ENCODE measurements at regions of chr2 and their contacts with region 1.

Region 1: GRCh38 chr2:231557571-231558237 is 27.5 kb upstream of the NMUR1 start:
- DNase-seq: peak in 1 of 2 donors; percentile 76
- ATAC-seq: peak; percentile 91
- H3K4me3 ChIP-seq: no peak overlapping the region
- H3K27ac ChIP-seq: no peak overlapping the region
- H3K4me1 ChIP-seq: no peaks in the 10 kb centered on the region
- H3K27me3 ChIP-seq: no peaks in the 10 kb centered on the region

Region 2: GRCh38 chr2:231425811-231426728 is 131.6 kb before region 1 on chr2:
- intact Hi-C with region 1: no loop called
- DNase-seq: peak in 1 of 2 donors; percentile 34
- ATAC-seq: no peak
- H3K4me3 ChIP-seq: no peak overlapping the region
- H3K27ac ChIP-seq: no peak overlapping the region
- H3K4me1 ChIP-seq: no peaks in the 10 kb centered on the region
- H3K27me3 ChIP-seq: no peaks in the 10 kb centered on the region

Region 3: DNA sequence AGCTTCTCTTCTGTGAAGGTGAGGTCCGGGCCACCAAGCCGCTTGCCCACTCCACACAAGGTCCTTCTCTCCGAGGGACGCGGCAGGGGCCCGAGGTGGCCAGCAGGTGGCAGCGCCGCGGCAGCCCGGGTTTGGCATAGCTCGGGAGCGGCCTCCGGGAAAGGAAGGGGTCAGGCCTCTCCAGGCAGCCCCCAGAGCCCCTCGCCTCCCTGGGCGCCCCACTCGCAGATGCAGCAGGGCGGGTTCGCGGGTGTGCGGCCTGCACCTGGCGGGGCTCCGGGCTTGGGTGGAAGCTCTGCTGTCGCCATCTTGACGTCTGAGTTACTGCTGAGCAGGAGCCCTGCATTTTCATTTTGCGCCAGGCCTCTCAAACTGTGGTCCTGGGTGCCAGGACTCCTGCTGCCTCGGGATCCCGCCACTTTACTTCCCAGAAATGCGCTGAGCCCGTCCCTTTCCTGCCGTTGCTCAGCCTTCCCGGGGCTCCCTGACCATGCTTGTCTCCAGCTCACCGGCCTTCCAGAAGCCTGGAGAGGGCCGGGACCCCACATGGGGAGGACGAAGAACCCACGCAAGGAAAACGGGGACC is 74.8 kb before region 1 on chr2:
- intact Hi-C with region 1: loop called (anchors 1 to 5 kb)
- DNase-seq: peak; percentile 85 to 94
- ATAC-seq: peak; percentile 92
- H3K4me3 ChIP-seq: peak overlapping the region; percentile 9 to 24
- H3K27ac ChIP-seq: peak overlapping the region; percentile 24 to 29
- H3K4me1 ChIP-seq: no peaks in the 10 kb centered on the region
- H3K27me3 ChIP-seq: no peaks in the 10 kb centered on the region

Region 4: DNA sequence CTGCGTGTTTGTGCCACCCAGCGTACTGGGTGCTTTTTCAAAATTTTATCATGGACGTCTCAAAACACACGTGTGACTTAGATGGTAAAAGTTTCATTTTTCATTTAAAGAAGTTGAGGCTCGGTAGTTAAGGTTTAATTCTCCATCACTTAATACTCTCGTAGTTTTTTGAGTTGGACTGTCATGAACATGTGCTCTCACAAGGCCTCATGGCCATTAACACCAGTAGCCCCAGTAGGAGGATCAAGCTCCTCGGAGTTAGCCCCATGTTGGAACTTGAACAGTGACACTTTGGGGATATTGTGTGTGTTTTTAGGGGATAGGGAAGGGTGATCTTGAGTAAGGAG is 42.8 kb before region 1 on chr2:
- intact Hi-C with region 1: loop called in 1 of 2 experiments (anchors 5 kb)
- DNase-seq: peak in 1 of 2 donors; percentile 3
- ATAC-seq: no peak
- H3K4me3 ChIP-seq: peak overlapping the region; percentile 59 to 71
- H3K27ac ChIP-seq: peak overlapping the region in 1 of 2 donors; percentile 68
- H3K4me1 ChIP-seq: no peaks in the 10 kb centered on the region
- H3K27me3 ChIP-seq: no peaks in the 10 kb centered on the region

Region 5: DNA sequence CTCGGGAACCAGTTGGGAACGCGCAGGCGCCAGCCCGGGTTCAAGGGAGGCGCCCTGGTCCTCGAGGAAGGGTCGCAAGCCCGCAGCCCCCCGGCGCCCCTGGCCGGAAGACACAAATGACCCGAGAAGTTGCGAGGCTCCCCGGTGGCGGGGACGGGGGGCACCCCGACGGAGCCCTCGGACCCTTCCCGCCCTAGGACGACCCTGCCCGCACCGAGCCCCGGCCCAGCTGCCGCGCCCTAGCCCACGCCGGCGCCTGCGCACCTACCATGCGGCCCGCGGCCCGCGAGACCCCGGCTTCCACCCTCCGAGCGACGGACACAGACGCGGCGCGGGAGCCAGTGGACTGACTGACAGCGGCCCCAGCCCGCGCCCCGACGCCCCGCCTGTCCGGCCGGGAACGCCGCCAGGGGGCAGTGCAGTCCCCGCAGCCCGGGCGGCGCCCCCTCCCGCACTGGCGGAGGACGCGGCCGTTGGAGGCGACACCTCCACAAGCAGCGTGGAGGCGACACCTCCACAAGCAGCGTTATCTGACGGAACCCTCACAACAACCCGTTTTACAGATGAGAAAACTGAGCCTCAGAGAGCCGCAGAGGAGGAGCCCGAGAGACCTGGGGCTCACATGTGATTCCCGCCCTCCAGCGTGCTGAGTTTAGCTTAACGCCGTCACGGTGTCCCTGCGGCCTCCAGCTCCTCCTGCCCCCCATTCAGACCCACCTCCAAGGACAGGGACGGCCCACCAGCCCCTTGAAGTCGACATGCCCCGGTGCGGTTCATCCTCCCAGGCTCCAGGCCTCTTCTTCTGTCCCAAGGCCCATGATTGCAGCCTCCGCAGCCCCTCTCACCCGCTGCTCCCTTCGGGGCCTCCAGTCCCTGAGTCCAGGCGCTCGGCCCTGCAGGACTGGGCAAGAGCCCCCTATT is 27.4 kb before region 1 on chr2 and contains the start of gene NMUR1:
- intact Hi-C with region 1: loop called in 1 of 2 experiments (anchors 2 kb)
- DNase-seq: peak; percentile 70 to 90
- ATAC-seq: peak; percentile 79
- H3K4me3 ChIP-seq: peak within 1 kb of the TSS in 1 of 2 donors; percentile 11
- H3K27ac ChIP-seq: no peak within 1 kb of the TSS
- H3K4me1 ChIP-seq: no peaks in the 10 kb centered on the region
- H3K27me3 ChIP-seq: no peaks in the 10 kb centered on the region
- total RNA-seq, gene NMUR1: 0.36 to 2.1 TPM

Region 6: DNA sequence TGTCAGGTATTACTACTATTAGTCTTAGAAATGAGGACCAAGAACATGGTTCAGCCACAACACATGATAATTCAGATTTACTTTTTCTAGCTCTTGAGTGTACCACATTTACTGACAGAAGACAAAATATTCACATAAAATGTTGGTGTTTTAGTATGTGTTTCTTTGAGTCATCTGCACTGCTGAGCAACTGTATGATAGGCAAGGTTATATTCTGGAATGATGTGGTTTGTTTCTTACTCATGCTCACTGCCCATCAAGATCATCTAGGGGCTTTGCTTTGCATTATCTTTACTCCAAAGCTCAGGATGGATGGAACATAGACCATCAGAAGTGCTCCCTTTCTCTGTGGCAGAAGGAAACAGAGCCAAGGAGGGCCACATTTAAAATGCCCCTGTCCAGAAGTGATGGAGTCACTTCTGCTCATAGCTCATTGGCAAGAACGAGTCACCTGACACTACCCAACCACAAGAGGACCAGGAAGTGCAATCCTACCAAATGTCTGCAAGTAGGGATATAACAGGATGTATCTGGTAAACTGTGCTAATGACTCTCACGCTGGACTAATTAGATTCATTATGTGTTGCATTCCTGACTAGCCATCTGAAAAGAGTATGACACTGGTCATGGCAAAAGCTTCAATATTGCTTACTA is 485.3 kb after region 1 on chr2:
- intact Hi-C with region 1: no loop called
- DNase-seq: no peak
- ATAC-seq: no peak
- H3K4me3 ChIP-seq: no peak overlapping the region
- H3K27ac ChIP-seq: no peak overlapping the region
- H3K4me1 ChIP-seq: no peaks in the 10 kb centered on the region
- H3K27me3 ChIP-seq: no peaks in the 10 kb centered on the region

Measured in aorta (tissue), 5 donors.